ENCODE measurements at regions of chr2 and their contacts with region 1.

Region 1: DNA sequence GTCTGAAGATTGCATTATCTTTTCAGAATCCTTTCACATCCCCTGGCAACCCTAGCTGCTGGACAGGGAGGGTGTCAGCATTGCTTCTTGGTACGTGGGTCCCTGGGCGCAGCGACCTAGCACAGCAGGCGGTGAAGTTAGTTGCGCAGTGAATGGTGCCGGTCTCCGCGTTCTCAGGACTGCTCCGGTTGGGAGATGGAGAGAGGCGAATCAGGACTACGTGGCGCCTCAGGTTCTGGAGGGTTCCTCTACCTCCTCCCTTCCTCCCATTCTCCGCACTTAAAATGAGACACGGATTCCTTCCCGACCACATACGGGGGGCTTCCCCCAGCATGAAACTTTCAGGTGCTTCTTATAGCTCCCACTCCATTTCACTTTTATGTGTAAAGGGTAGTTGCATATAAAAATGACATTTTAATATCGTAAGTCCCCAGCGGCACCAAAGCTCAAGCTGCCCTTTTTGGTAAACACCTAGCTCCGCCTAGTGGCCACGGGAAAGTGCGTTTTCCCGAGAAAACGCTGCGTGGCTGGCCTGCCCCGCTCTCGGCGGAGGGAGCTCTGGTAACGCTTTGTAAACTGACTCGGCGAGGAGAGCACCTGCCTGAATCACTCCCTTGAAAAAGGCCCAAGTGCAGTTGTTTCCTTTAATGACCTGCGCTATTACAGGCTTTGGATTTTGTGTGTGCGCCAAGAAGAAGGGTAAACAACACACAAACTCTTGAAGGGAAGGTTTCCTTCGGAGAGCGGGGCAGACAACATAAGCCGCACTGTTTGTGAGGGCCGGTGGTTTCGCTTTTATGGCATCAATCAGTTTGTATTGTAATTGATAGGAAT is 32.9 kb upstream of the INHBB start:
- DNase-seq: peak; percentile 80
- H3K4me3 ChIP-seq: peak overlapping the region; percentile 21 to 42; a peak in 2 of 4 replicates
- H3K27ac ChIP-seq: no peak overlapping the region
- H3K4me1 ChIP-seq: peaks cover 0 to 4% of the 10 kb centered on the region in 2 experiments; a peak in 1 of 4 replicates
- H3K27me3 ChIP-seq: no peaks in the 10 kb centered on the region
- CTCF ChIP-seq: peak; percentile 90
- EP300 ChIP-seq: no peak
- RAD21 ChIP-seq: peak; percentile 85

Region 2: DNA sequence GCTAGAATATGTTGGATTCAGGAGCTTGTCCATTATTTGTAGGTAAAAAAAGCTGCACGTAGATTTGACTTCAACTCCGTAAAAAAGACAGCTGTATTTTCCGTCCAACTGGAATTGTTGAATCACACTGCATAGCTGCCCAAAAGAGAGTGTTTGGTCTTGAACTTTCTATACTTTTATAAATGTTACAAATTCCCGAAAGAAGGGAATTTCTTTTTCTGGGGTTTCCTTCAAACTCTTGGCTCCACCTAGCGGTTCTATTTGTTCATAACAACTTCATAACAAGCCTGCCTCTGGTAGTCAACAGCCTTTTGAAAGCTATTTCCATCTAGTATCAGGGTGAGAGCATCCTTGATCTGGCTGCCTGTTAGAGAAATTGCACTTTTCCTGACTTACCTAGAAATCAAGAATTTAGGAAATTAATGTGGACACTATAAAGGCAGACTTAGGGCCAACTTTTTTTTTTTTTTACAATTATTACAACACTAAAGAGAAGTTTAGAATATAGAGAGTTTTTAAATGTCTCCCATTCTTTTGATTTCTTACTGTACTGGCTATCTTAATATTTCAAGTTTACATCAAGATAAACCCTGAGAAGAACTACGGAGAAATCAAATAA is 138.0 kb before region 1 on chr2:
- CTCF ChIA-PET with region 1: interaction called, 10 read pairs
- POLR2A ChIA-PET with region 1: no interaction called
- DNase-seq: peak; percentile 74
- H3K4me3 ChIP-seq: no peak overlapping the region
- H3K27ac ChIP-seq: peak overlapping the region in 1 of 2 experiments; percentile 28; a peak in 1 of 4 replicates
- H3K4me1 ChIP-seq: no peaks in the 10 kb centered on the region; a peak in 1 of 4 replicates
- H3K27me3 ChIP-seq: no peaks in the 10 kb centered on the region
- CTCF ChIP-seq: peak; percentile 81
- EP300 ChIP-seq: no peak
- RAD21 ChIP-seq: peak; percentile 88

Region 3: GRCh38 chr2:120252225-120253021 is 60.7 kb before region 1 on chr2 and contains the start of gene RALB:
- CTCF ChIA-PET with region 1: interaction called, 11 read pairs
- POLR2A ChIA-PET with region 1: interaction called, 3 read pairs
- DNase-seq: peak; percentile 99
- H3K4me3 ChIP-seq: peak within 1 kb of the TSS; percentile 71 to 95
- H3K27ac ChIP-seq: peak within 1 kb of the TSS; percentile 58 to 87
- H3K4me1 ChIP-seq: peaks cover 10 to 20% of the 10 kb centered on the region in 2 experiments; a peak in 3 of 4 replicates
- H3K27me3 ChIP-seq: no peaks in the 10 kb centered on the region
- CTCF ChIP-seq: no peak
- EP300 ChIP-seq: no peak; a peak in 1 of 4 replicates
- RAD21 ChIP-seq: no peak
- polyA plus RNA-seq, gene RALB: 37.2 and 40.8 TPM in 2 replicates

Region 4: DNA sequence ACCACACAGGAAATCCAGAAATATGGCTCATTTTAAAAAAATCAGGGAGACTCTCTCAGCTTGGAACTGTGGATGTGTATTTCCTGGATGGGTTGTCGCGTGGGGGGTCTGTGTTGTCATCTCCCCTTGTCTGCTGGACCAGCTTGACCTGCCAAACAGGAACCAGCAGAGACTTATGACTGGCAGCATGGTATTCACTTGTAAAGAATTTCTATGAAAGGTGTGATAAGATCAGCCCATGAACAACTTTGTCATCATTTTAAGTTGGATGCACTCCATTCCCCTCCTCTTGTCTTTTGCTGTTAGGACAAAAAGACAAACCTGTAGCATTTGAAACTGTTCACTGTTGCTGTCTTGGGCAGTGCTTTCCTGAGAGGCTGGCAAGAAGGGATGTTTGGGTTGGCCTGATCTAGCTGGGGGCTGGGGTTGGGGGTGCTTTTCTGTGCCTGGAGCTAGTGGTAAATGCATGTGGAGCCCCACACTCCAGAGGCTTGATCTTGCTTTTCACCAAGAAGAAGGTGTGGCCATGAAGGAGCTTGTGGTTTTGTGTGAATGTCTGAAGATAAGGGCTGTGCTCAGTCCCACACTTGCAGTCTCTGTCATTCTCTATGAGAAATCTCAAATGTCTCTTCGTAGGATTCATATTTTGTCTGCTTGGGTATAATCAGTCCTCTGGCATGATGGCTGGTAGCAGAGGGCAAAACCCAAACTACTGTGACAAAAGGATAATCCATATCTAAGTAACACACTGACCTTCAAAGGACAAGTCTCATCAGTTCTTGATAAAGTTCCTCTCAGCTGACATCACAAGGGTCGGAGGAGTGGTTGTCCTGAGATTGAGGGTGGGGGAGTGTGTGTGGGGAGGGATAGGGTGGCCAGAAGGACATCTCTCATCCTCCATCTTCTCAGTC is 21.4 kb before region 1 on chr2:
- CTCF ChIA-PET with region 1: interaction called, 23 read pairs
- POLR2A ChIA-PET with region 1: no interaction called
- DNase-seq: no peak
- H3K4me3 ChIP-seq: no peak overlapping the region; a peak in 1 of 4 replicates
- H3K27ac ChIP-seq: peak overlapping the region in 1 of 2 experiments; percentile 60; a peak in 2 of 4 replicates
- H3K4me1 ChIP-seq: peaks cover 8 to 18% of the 10 kb centered on the region in 2 experiments; a peak in 3 of 4 replicates
- H3K27me3 ChIP-seq: no peaks in the 10 kb centered on the region
- CTCF ChIP-seq: no peak
- EP300 ChIP-seq: peak in 1 of 2 experiments; percentile 68; a peak in 1 of 4 replicates
- RAD21 ChIP-seq: no peak

Region 5: GRCh38 chr2:120324933-120325332 is 11.9 kb after region 1 on chr2:
- CTCF ChIA-PET with region 1: interaction called, 25 read pairs
- POLR2A ChIA-PET with region 1: no interaction called
- DNase-seq: no peak
- H3K4me3 ChIP-seq: no peak overlapping the region
- H3K27ac ChIP-seq: no peak overlapping the region
- H3K4me1 ChIP-seq: peaks cover 0 to 2% of the 10 kb centered on the region in 2 experiments; a peak in 1 of 4 replicates
- H3K27me3 ChIP-seq: peaks cover 10% of the 10 kb centered on the region; the same call in 1 of the 2 replicates
- CTCF ChIP-seq: no peak
- EP300 ChIP-seq: no peak
- RAD21 ChIP-seq: no peak